H1 (cell line): ENCODE measurements at regions of chr4 and their contacts with region 1.

Region 1: DNA sequence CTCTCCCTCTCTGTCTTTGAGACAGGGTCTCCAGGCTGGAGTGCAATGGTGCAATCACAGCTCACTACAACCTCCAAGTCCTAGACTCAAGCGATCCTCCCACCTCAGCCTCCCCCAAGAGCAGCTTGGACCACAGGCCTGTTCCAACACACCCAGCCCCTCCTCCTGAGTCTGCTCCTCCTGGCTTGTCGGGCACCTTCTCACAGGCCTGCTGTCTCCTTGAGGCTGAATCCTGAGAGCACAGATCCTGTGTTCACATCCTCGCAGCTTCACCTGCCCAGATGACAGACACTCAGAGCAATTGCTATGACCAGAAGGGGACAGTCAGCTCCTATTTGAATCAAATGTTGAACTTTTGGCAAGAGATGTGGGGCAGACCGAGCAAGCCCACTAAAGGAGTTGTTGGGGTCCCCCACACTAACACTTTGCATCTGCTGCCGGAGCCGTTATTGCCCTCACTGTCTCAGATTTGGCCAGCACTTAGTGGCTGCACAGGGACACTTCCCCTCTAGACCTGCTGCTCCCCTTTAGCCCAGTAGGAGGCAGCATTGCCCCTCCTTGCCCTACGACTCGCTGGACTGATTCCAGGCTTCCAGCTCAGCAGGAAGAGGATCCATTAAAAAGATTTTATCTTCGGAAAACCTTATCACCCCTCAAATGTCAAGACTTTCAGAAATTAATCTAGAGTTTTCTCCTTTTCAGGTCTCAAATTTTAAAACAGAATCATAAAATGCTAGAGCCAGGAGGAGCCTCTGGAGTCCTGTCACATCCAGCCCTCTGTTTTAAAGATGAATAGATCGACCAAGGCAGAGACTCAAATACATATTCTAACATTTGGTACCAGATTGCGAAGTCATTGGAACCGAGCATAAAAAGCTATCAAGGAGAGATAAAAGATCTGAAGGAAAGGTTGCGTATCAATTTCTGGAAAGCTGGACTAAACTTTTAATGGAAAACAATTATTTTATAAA is 113.7 kb downstream of the USP46 start:
- DNase-seq: peak; percentile 39 to 92
- H3K4me3 ChIP-seq: no peak overlapping the region
- H3K27ac ChIP-seq: no peak overlapping the region
- H3K4me1 ChIP-seq: peaks cover 0 to 3% (median 0%) of the 10 kb centered on the region in 4 experiments; a peak in 1 of 7 replicates
- H3K27me3 ChIP-seq: no peaks in the 10 kb centered on the region
- CTCF ChIP-seq: peak; percentile 84 to 97 (median 97)
- EP300 ChIP-seq: no peak
- POLR2A ChIP-seq: no peak
- RAD21 ChIP-seq: peak; percentile 96 to 97

Region 2: GRCh38 chr4:52234561-52235440 is 310.6 kb before region 1 on chr4:
- CTCF ChIA-PET with region 1: interaction called, 12 read pairs
- POLR2A ChIA-PET with region 1: no interaction called
- DNase-seq: no peak
- H3K4me3 ChIP-seq: no peak overlapping the region
- H3K27ac ChIP-seq: no peak overlapping the region
- H3K4me1 ChIP-seq: peaks cover 0 to 2% (median 0%) of the 10 kb centered on the region in 4 experiments; a peak in 1 of 7 replicates
- H3K27me3 ChIP-seq: no peaks in the 10 kb centered on the region
- CTCF ChIP-seq: peak in 2 of 3 experiments; percentile 29 to 59; a peak in 2 of 4 replicates
- EP300 ChIP-seq: no peak
- POLR2A ChIP-seq: no peak
- RAD21 ChIP-seq: peak; percentile 85 to 87

Region 3: GRCh38 chr4:52376132-52376704 is 169.2 kb before region 1 on chr4:
- CTCF ChIA-PET with region 1: interaction called, 22 read pairs
- POLR2A ChIA-PET with region 1: no interaction called
- DNase-seq: no peak
- H3K4me3 ChIP-seq: no peak overlapping the region
- H3K27ac ChIP-seq: no peak overlapping the region
- H3K4me1 ChIP-seq: peaks cover 0 to 8% (median 5%) of the 10 kb centered on the region in 4 experiments; a peak in 6 of 7 replicates
- H3K27me3 ChIP-seq: no peaks in the 10 kb centered on the region
- CTCF ChIP-seq: peak in 2 of 3 experiments; percentile 33 to 50; a peak in 2 of 4 replicates
- EP300 ChIP-seq: no peak
- POLR2A ChIP-seq: no peak
- RAD21 ChIP-seq: peak; percentile 74 to 76

Region 4: DNA sequence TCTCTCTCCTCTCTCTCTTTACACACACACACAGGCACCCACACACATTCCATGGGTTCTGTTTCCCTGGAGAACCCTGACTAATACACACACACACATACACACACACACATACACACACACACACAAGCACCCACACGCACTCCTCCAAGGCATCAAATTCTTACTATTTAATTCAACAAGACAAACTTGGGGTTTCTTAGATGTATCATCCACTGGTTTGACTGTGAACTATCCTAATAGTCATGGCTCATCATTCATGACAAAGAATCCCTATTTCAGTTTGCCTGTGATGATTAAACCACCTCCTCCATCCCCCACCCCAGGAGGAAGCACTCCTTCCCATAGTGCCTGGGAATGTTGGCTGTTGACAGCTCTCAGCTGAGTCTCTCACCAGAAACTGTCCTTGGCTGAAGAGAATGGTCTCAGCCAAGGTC is 15.5 kb after region 1 on chr4:
- CTCF ChIA-PET with region 1: interaction called, 24 read pairs
- POLR2A ChIA-PET with region 1: no interaction called
- DNase-seq: no peak
- H3K4me3 ChIP-seq: no peak overlapping the region
- H3K27ac ChIP-seq: no peak overlapping the region
- H3K4me1 ChIP-seq: no peaks in the 10 kb centered on the region
- H3K27me3 ChIP-seq: no peaks in the 10 kb centered on the region
- CTCF ChIP-seq: no peak
- EP300 ChIP-seq: no peak
- POLR2A ChIP-seq: no peak
- RAD21 ChIP-seq: no peak

Region 5: GRCh38 chr4:52576857-52577623 is 31.7 kb after region 1 on chr4:
- CTCF ChIA-PET with region 1: interaction called, 16 read pairs
- POLR2A ChIA-PET with region 1: no interaction called
- DNase-seq: no peak
- H3K4me3 ChIP-seq: no peak overlapping the region
- H3K27ac ChIP-seq: no peak overlapping the region
- H3K4me1 ChIP-seq: no peaks in the 10 kb centered on the region
- H3K27me3 ChIP-seq: no peaks in the 10 kb centered on the region
- CTCF ChIP-seq: no peak
- EP300 ChIP-seq: no peak
- POLR2A ChIP-seq: no peak
- RAD21 ChIP-seq: no peak

Region 6: GRCh38 chr4:52588097-52588782 is 42.9 kb after region 1 on chr4:
- CTCF ChIA-PET with region 1: interaction called, 54 read pairs
- POLR2A ChIA-PET with region 1: interaction called, 3 read pairs
- DNase-seq: peak; percentile 15 to 70
- H3K4me3 ChIP-seq: no peak overlapping the region
- H3K27ac ChIP-seq: no peak overlapping the region
- H3K4me1 ChIP-seq: no peaks in the 10 kb centered on the region
- H3K27me3 ChIP-seq: no peaks in the 10 kb centered on the region
- CTCF ChIP-seq: peak; percentile 60 to 85 (median 79)
- EP300 ChIP-seq: no peak
- POLR2A ChIP-seq: no peak
- RAD21 ChIP-seq: peak; percentile 72 to 77

Region 7: DNA sequence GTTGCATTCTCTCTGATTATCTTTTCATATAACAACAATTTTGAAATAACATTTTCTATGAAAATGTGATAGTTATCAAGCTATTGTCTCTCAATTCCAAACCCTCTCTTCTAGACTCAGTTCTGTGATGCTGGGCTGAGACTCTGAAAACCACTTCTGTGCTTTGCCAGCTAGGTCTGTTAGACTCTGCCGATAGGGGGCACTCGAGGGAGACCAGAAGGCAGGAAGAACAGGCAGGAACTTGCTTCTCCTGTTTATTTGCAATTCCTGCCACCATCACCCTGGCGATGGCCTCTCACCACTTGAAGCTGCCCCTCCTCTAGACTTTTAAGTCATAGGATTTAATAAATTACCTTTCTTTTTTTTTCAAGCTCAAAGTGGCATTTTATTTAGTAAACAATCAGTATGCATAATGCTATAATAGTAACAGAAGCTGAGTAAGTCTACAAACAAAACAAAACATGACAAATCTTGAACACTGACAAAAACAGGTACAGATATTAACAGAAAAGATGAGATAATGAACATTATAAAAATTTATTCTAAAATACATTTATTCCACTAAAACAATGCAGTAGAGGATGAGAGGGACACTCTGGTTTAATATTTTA is 366.4 kb after region 1 on chr4:
- CTCF ChIA-PET with region 1: interaction called, 11 read pairs
- POLR2A ChIA-PET with region 1: no interaction called
- DNase-seq: peak; percentile 59 to 95
- H3K4me3 ChIP-seq: no peak overlapping the region
- H3K27ac ChIP-seq: no peak overlapping the region
- H3K4me1 ChIP-seq: peaks cover 0 to 3% (median 0%) of the 10 kb centered on the region in 4 experiments; a peak in 2 of 7 replicates
- H3K27me3 ChIP-seq: no peaks in the 10 kb centered on the region
- CTCF ChIP-seq: peak; percentile 74 to 93 (median 77)
- EP300 ChIP-seq: no peak
- POLR2A ChIP-seq: no peak
- RAD21 ChIP-seq: peak; percentile 71 to 80